ENCODE measurements at regions of chr11 and their contacts with region 1.

Region 1: GRCh38 chr11:75547580-75548058 is 14.4 kb upstream of the SERPINH1 start:
- DNase-seq: peak; percentile 65
- ATAC-seq: peak; percentile 99
- H3K4me3 ChIP-seq: no peak overlapping the region
- H3K27ac ChIP-seq: peak overlapping the region; percentile 41
- H3K4me1 ChIP-seq: peaks cover 3% of the 10 kb centered on the region
- H3K27me3 ChIP-seq: peaks cover 8% of the 10 kb centered on the region
- CTCF ChIP-seq: peak; percentile 82
- POLR2A ChIP-seq: no peak
- RAD21 ChIP-seq: peak; percentile 98

Region 2: GRCh38 chr11:75532200-75533048 is 15.2 kb before region 1 on chr11:
- CTCF ChIA-PET with region 1: no interaction called
- POLR2A ChIA-PET with region 1: no interaction called
- dilution Hi-C with region 1: no loop called
- in situ Hi-C with region 1: no loop called
- intact Hi-C with region 1: no loop called
- DNase-seq: peak; percentile 41
- ATAC-seq: peak; percentile 94
- H3K4me3 ChIP-seq: no peak overlapping the region
- H3K27ac ChIP-seq: no peak overlapping the region
- H3K4me1 ChIP-seq: peaks cover 2% of the 10 kb centered on the region; the same call in 1 of the 2 replicates
- H3K27me3 ChIP-seq: peaks cover 5% of the 10 kb centered on the region; the same call in 1 of the 2 replicates
- CTCF ChIP-seq: peak; percentile 89
- POLR2A ChIP-seq: no peak
- RAD21 ChIP-seq: peak; percentile 96

Region 3: GRCh38 chr11:75562048-75562835 is 14.6 kb after region 1 on chr11 and contains the start of gene SERPINH1:
- CTCF ChIA-PET with region 1: interaction called, 6 read pairs
- POLR2A ChIA-PET with region 1: interaction called, 18 read pairs
- dilution Hi-C with region 1: no loop called
- in situ Hi-C with region 1: no loop called
- intact Hi-C with region 1: loop called (anchors 1 kb)
- DNase-seq: peak; percentile 84
- ATAC-seq: peak; percentile 30
- H3K4me3 ChIP-seq: peak within 1 kb of the TSS; percentile 61
- H3K27ac ChIP-seq: peak within 1 kb of the TSS; percentile 96
- H3K4me1 ChIP-seq: peaks cover 47% of the 10 kb centered on the region
- H3K27me3 ChIP-seq: no peaks in the 10 kb centered on the region
- CTCF ChIP-seq: no peak
- POLR2A ChIP-seq: peak; percentile 94
- RAD21 ChIP-seq: no peak
- total RNA-seq, gene SERPINH1: 772 and 841 TPM in 2 replicates

Region 4: DNA sequence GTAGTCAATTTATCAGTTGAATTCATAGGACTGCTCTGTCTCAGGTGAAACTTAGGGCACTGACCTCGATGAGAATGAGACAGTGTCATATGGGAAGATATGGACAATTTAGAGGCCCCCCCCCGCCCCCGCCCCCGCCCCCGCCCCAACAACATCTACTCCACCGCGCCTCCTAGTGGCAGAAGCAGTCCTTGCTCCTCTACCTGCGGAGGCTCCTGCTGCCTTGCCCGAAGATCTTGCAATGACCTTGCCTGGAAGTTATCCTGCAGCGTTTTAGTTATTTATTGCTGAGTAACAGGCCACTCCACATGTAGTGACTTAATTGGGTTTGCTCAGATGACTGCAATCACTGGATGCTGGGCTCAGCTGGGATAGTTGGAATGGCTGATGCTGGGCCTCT is 29.6 kb after region 1 on chr11:
- CTCF ChIA-PET with region 1: interaction called, 7 read pairs
- POLR2A ChIA-PET with region 1: no interaction called
- dilution Hi-C with region 1: no loop called
- in situ Hi-C with region 1: no loop called
- intact Hi-C with region 1: loop called (anchors 1 kb)
- DNase-seq: peak; percentile 38
- ATAC-seq: peak; percentile 5
- H3K4me3 ChIP-seq: no peak overlapping the region
- H3K27ac ChIP-seq: no peak overlapping the region
- H3K4me1 ChIP-seq: peaks cover 2% of the 10 kb centered on the region; the same call in 1 of the 2 replicates
- H3K27me3 ChIP-seq: no peaks in the 10 kb centered on the region
- CTCF ChIP-seq: peak; percentile 42
- POLR2A ChIP-seq: no peak
- RAD21 ChIP-seq: peak; percentile 23; the same call in 1 of the 2 replicates

Region 5: GRCh38 chr11:75802913-75803820 is 255.5 kb after region 1 on chr11:
- CTCF ChIA-PET with region 1: no interaction called
- POLR2A ChIA-PET with region 1: no interaction called
- dilution Hi-C with region 1: no loop called
- in situ Hi-C with region 1: no loop called
- intact Hi-C with region 1: loop called (anchors 1 kb)
- DNase-seq: peak; percentile 65
- ATAC-seq: peak; percentile 99
- H3K4me3 ChIP-seq: no peak overlapping the region
- H3K27ac ChIP-seq: no peak overlapping the region
- H3K4me1 ChIP-seq: no peaks in the 10 kb centered on the region
- H3K27me3 ChIP-seq: no peaks in the 10 kb centered on the region
- CTCF ChIP-seq: peak; percentile 91
- POLR2A ChIP-seq: no peak
- RAD21 ChIP-seq: peak; percentile 88